H1 (cell line): ENCODE measurements at regions of chr4 and their contacts with region 1.

Region 1: GRCh38 chr4:856225-856901 is 30.4 kb upstream of the CPLX1 start:
- DNase-seq: no peak
- H3K4me3 ChIP-seq: no peak overlapping the region
- H3K27ac ChIP-seq: no peak overlapping the region
- H3K4me1 ChIP-seq: no peaks in the 10 kb centered on the region
- H3K27me3 ChIP-seq: no peaks in the 10 kb centered on the region
- CTCF ChIP-seq: no peak
- EP300 ChIP-seq: no peak
- POLR2A ChIP-seq: no peak
- RAD21 ChIP-seq: no peak

Region 2: GRCh38 chr4:766152-766515 is 90.2 kb before region 1 on chr4:
- CTCF ChIA-PET with region 1: no interaction called
- POLR2A ChIA-PET with region 1: no interaction called
- DNase-seq: no peak
- H3K4me3 ChIP-seq: no peak overlapping the region
- H3K27ac ChIP-seq: no peak overlapping the region
- H3K4me1 ChIP-seq: no peaks in the 10 kb centered on the region
- H3K27me3 ChIP-seq: no peaks in the 10 kb centered on the region
- CTCF ChIP-seq: no peak
- EP300 ChIP-seq: no peak
- POLR2A ChIP-seq: no peak
- RAD21 ChIP-seq: no peak

Region 3: DNA sequence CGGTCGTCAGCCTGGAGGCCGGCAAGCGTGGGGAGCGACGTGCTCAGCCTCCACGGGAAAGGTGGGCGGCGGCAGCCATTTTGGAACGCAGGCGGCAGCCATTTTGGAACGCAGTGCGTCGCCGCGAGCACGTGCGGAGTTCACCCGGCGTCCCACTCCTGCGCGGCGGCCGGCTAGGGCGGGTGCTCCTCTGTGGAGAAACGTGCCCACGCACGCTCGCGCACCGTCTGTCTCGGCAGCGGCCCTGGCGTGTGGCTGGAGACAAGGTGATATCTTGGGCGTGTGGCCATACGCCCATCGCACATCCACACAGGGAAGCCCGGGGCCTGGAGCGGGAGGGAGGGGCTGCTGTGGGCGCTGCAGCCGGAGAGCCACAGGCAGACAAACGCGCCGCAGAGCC is 51.6 kb before region 1 on chr4:
- CTCF ChIA-PET with region 1: no interaction called
- POLR2A ChIA-PET with region 1: no interaction called
- DNase-seq: no peak
- H3K4me3 ChIP-seq: no peak overlapping the region
- H3K27ac ChIP-seq: no peak overlapping the region
- H3K4me1 ChIP-seq: no peaks in the 10 kb centered on the region
- H3K27me3 ChIP-seq: peaks cover 2 to 21% (median 13%) of the 10 kb centered on the region in 4 experiments; a peak in 5 of 7 replicates
- CTCF ChIP-seq: no peak
- EP300 ChIP-seq: no peak
- POLR2A ChIP-seq: no peak
- RAD21 ChIP-seq: no peak

Region 4: GRCh38 chr4:866761-867390 is 10.5 kb after region 1 on chr4:
- CTCF ChIA-PET with region 1: interaction called, 10 read pairs
- POLR2A ChIA-PET with region 1: no interaction called
- DNase-seq: no peak
- H3K4me3 ChIP-seq: no peak overlapping the region
- H3K27ac ChIP-seq: no peak overlapping the region
- H3K4me1 ChIP-seq: no peaks in the 10 kb centered on the region
- H3K27me3 ChIP-seq: no peaks in the 10 kb centered on the region
- CTCF ChIP-seq: no peak
- EP300 ChIP-seq: no peak
- POLR2A ChIP-seq: no peak
- RAD21 ChIP-seq: no peak

Region 5: DNA sequence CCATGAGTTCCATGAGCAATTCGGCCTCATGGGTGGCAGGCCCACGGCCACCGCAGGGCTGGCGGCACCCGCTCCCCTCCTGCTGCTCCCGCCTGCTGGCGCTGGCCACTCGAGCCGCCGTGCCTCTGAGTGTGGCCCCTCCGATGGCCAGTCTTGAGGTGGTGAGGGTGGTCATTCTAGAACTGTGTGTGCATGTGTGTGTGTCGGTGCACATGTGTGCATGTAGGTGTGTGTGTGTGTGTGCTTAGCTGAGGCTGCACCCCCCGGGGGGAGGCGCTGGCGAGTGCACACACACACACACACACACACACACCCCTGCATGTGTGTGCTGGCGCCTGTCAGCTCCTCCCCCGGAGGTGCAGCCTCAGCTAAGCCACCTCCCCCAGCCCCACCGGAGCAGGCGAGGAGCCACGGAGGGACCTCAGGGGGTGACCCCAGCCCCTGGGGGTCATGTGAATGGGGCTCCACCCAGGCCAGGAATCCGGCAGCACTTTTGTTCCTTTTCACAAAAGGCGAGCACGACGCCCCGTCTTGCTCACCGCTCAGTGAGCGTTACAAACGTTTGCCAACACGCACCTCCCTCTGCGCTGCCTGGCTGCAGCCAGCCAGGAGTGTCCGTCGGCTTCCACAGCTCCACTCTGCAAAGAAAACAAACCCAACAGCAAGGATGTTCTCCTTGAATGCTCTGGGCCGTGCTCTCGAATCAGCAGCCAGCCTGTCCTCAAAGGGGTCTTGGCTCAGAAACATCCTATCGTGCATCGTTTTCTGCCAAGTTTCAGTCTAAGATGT is 185.0 kb after region 1 on chr4:
- CTCF ChIA-PET with region 1: no interaction called
- POLR2A ChIA-PET with region 1: no interaction called
- DNase-seq: no peak
- H3K4me3 ChIP-seq: no peak overlapping the region
- H3K27ac ChIP-seq: no peak overlapping the region
- H3K4me1 ChIP-seq: peaks cover 0 to 26% (median 15%) of the 10 kb centered on the region in 4 experiments; a peak in 6 of 7 replicates
- H3K27me3 ChIP-seq: peaks cover 0 to 5% (median 0%) of the 10 kb centered on the region in 4 experiments; a peak in 2 of 7 replicates
- CTCF ChIP-seq: no peak
- EP300 ChIP-seq: no peak
- POLR2A ChIP-seq: no peak
- RAD21 ChIP-seq: no peak